ENCODE measurements at regions of chr1 and their contacts with region 1.

Region 1: DNA sequence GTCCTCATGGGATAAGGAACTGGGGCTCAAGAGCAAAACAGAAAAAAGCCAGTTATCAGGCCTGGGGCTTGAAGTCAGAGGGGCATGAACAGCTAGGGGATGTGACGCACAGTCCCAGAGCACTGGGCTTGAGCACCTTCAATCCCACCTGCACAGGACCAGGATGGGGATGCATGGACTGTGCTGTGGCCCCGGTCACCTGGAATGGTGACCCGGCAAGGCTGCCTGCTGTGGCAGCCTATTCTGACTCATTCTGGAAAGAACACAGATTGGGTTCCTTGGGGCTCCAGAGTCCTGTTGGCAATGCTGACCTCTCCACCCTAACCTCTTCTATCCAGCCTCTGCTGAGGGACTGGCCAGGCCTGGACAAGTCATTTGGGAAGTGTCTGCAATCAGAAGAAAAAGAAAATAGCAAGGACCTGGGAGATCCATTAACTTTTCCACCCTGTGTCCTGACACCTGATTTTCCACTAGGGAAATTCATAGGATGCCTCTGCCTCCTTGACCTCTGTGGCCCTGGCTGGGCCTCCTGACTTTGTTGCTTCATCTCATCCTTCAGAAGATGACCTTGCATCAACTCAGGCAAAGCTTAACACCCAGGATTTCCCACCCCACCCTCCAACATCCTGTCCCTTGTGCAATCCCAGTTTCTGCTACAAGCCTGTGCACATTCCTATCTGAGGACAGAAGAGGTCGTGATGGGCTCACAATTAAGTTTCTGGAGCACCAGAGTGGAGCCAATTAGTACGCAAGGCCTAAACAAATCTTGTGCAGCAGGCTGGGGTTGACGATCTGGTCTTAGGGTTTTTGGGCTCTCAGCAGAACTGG is 17.9 kb upstream of the FMOD start:
- DNase-seq: no peak
- H3K4me3 ChIP-seq: no peak overlapping the region
- H3K27ac ChIP-seq: no peak overlapping the region
- H3K4me1 ChIP-seq: peaks cover 14% of the 10 kb centered on the region
- CTCF ChIP-seq: peak; percentile 34; the same call in 1 of the 2 replicates

Region 2: GRCh38 chr1:203381151-203381751 is 12.4 kb after region 1 on chr1:
- CTCF ChIA-PET with region 1: interaction called, 4 read pairs
- POLR2A ChIA-PET with region 1: interaction called, 15 read pairs
- intact Hi-C with region 1: no loop called
- DNase-seq: peak; percentile 85
- H3K4me3 ChIP-seq: peak overlapping the region; percentile 57
- H3K27ac ChIP-seq: peak overlapping the region; percentile 89
- H3K4me1 ChIP-seq: peaks cover 47% of the 10 kb centered on the region
- CTCF ChIP-seq: no peak

Region 3: DNA sequence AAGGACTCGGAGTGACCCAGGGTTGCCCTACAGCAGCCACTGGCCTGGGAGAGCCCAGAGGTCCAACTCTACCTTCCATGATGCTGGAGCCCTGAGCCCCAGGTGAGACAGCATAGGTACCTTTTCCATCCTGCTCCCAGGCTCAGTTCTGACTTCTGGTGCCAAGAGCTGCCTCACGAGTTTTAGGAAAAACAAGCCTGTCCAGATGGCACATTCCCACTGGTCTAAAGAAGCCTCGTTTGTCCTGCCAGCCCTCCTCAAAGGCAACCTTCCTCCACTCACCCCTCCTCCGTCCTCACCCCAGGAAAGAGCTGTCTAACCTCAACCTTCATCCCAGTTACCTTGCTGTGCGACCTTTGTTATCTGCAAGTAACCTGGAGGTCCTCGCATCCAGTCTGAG is 53.3 kb after region 1 on chr1:
- CTCF ChIA-PET with region 1: no interaction called
- POLR2A ChIA-PET with region 1: no interaction called
- intact Hi-C with region 1: no loop called
- DNase-seq: no peak
- H3K4me3 ChIP-seq: no peak overlapping the region
- H3K27ac ChIP-seq: no peak overlapping the region
- H3K4me1 ChIP-seq: peaks cover 10% of the 10 kb centered on the region
- CTCF ChIP-seq: no peak